PC-3 (cell line): ENCODE measurements at regions of chr6 and their contacts with region 1.

Region 1: GRCh38 chr6:139230391-139230840 is 61.4 kb downstream of the TXLNB start:
- DNase-seq: peak; percentile 42
- ATAC-seq: peak; percentile 97
- H3K4me3 ChIP-seq: no peak overlapping the region
- H3K27ac ChIP-seq: no peak overlapping the region
- H3K4me1 ChIP-seq: 0 out of 2 replicates have a peak, but pooled peaks cover 4% of the 10 kb centered on the region
- H3K27me3 ChIP-seq: no peaks in the 10 kb centered on the region
- CTCF ChIP-seq: peak; percentile 52

Region 2: GRCh38 chr6:139080255-139080920 is 150.0 kb before region 1 on chr6:
- CTCF ChIA-PET with region 1: no interaction called
- POLR2A ChIA-PET with region 1: no interaction called
- intact Hi-C with region 1: no loop called
- DNase-seq: peak; percentile 75
- ATAC-seq: peak; percentile 98
- H3K4me3 ChIP-seq: no peak overlapping the region
- H3K27ac ChIP-seq: no peak overlapping the region
- H3K4me1 ChIP-seq: peaks cover 15% of the 10 kb centered on the region
- H3K27me3 ChIP-seq: no peaks in the 10 kb centered on the region
- CTCF ChIP-seq: no peak

Region 3: GRCh38 chr6:139219271-139219729 is 11.1 kb before region 1 on chr6:
- CTCF ChIA-PET with region 1: interaction called, 19 read pairs
- POLR2A ChIA-PET with region 1: no interaction called
- intact Hi-C with region 1: no loop called
- DNase-seq: peak; percentile 75
- ATAC-seq: peak; percentile 100
- H3K4me3 ChIP-seq: no peak overlapping the region
- H3K27ac ChIP-seq: no peak overlapping the region
- H3K4me1 ChIP-seq: no peaks in the 10 kb centered on the region
- H3K27me3 ChIP-seq: no peaks in the 10 kb centered on the region
- CTCF ChIP-seq: peak; percentile 85

Region 4: GRCh38 chr6:139271056-139271455 is 40.6 kb after region 1 on chr6:
- CTCF ChIA-PET with region 1: no interaction called
- POLR2A ChIA-PET with region 1: no interaction called
- intact Hi-C with region 1: no loop called
- DNase-seq: peak; percentile 62
- ATAC-seq: peak; percentile 84
- H3K4me3 ChIP-seq: no peak overlapping the region
- H3K27ac ChIP-seq: no peak overlapping the region
- H3K4me1 ChIP-seq: peaks cover 11% of the 10 kb centered on the region
- H3K27me3 ChIP-seq: no peaks in the 10 kb centered on the region
- CTCF ChIP-seq: no peak

Region 5: DNA sequence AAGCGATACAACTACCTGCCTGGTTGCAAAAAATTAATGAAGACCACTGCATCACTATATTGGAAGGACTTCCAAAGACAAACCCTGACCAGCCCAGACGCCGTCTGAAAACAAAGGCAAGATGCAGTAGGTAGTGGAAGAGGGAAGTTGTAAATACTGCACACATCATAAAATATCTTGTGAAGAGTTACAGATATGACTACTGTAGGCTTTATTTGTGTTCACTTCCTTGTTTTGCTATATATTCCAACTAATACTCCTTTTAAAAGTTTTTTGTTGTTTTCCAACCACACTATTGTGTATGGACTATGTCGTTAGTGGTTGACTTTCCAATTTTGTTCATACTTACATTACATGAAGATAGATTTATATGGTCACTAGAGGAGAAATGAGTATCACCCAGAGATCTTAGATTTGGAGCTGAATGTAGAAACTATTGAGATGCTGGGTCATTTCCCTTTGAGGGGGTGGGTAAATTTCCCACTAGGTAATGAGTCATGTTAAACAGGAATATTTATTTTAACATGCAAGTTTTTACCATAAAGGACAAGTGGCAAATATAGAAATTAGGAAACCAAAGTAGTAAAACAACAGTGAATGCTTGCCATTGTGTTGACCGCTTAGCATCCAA is 78.0 kb after region 1 on chr6:
- CTCF ChIA-PET with region 1: no interaction called
- POLR2A ChIA-PET with region 1: no interaction called
- intact Hi-C with region 1: loop called (anchors 5 kb)
- DNase-seq: peak; percentile 13
- ATAC-seq: peak; percentile 81
- H3K4me3 ChIP-seq: no peak overlapping the region
- H3K27ac ChIP-seq: peak overlapping the region; percentile 50
- H3K4me1 ChIP-seq: peaks cover 16% of the 10 kb centered on the region
- H3K27me3 ChIP-seq: no peaks in the 10 kb centered on the region
- CTCF ChIP-seq: no peak